ENCODE measurements at regions of chr2 and their contacts with region 1.

Region 1: GRCh38 chr2:205680067-205680466 is 2.2 kb upstream of the NRP2 start:
- DNase-seq: peak; percentile 88 to 90
- H3K4me3 ChIP-seq: no peak overlapping the region
- H3K4me1 ChIP-seq: peaks cover 3% of the 10 kb centered on the region
- H3K27me3 ChIP-seq: 0 out of 2 replicates have a peak, but pooled peaks cover 2% of the 10 kb centered on the region

Region 2: DNA sequence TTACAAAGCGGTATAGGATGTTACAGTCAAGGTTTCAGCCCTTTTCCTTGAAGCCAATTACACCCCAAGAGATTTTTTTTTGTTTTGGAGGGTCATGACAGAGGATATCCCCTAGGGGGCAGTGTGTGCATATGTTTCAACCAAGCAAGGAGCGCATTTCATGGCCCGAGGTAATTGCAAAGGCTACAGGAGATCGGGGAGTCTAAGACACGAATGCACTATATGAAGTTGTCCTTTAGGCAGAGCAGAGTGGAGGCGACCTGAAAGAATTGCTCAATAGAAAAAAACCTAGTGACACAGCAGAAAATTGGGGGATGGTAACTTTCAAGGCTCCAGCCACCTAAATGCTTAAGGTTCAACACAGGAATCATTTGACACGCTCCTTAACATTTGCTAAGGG is 1354.6 kb before region 1 on chr2:
- in situ Hi-C with region 1: loop called (anchors 25 kb)
- DNase-seq: peak; percentile 48 to 76
- H3K4me3 ChIP-seq: no peak overlapping the region
- H3K4me1 ChIP-seq: no peaks in the 10 kb centered on the region
- H3K27me3 ChIP-seq: no peaks in the 10 kb centered on the region

Region 3: GRCh38 chr2:204655131-204655530 is 1024.9 kb before region 1 on chr2:
- in situ Hi-C with region 1: no loop called
- DNase-seq: no peak
- H3K4me3 ChIP-seq: no peak overlapping the region
- H3K4me1 ChIP-seq: peaks cover 3% of the 10 kb centered on the region; the same call in 1 of the 2 replicates
- H3K27me3 ChIP-seq: no peaks in the 10 kb centered on the region

Region 4: DNA sequence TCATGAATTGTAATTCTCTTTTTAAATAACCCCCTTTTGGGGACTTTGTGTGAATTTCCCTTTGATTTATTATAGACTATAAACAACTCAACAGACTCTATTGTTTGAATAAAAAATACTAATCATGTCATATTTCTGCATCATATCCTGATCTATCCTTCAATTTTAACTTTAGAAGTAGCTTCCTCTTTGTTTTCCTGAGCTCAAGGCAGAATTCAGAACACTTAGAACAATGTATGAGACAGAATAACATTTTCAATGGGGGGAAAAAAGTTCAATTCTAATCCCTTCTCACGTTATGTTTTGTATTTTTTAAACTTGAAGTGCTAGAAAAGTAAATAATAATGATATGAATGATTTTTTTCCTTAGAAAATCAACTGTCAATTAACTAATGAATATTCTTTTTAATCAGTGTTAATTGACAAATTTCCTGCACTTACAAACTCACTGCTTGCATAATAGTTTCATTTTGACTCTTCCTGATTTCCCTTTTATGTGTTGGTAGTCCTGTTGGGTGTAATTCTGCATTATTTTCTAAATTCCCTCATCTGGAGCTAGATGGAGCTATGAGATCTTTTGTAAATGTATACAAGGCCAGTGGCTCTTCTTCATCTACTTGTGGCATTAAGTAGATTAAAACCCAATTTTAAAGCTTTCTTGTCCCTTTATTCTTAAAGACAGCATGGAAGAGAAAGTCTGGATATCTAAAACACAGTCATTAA is 808.7 kb before region 1 on chr2:
- in situ Hi-C with region 1: loop called (anchors 25 kb)
- DNase-seq: peak in 1 of 2 experiments; percentile 54
- H3K4me3 ChIP-seq: no peak overlapping the region
- H3K4me1 ChIP-seq: no peaks in the 10 kb centered on the region
- H3K27me3 ChIP-seq: no peaks in the 10 kb centered on the region

Region 5: GRCh38 chr2:206079724-206080465 is 399.8 kb after region 1 on chr2:
- in situ Hi-C with region 1: no loop called
- DNase-seq: peak in 1 of 2 experiments; percentile 17
- H3K4me3 ChIP-seq: no peak overlapping the region
- H3K4me1 ChIP-seq: peaks cover 18% of the 10 kb centered on the region
- H3K27me3 ChIP-seq: no peaks in the 10 kb centered on the region

Measured in HAP-1 (cell line).